GM12878 (cell line): ENCODE measurements at regions of chr11 and their contacts with region 1.

Region 1: GRCh38 chr11:9534791-9535781 is 38.4 kb upstream of the WEE1 start:
- DNase-seq: peak; percentile 25
- ATAC-seq: peak; percentile 87
- H3K4me3 ChIP-seq: no peak overlapping the region
- H3K27ac ChIP-seq: no peak overlapping the region
- H3K4me1 ChIP-seq: no peaks in the 10 kb centered on the region
- H3K27me3 ChIP-seq: no peaks in the 10 kb centered on the region
- CTCF ChIP-seq: peak; percentile 79 to 92 (median 86)
- EP300 ChIP-seq: no peak
- POLR2A ChIP-seq: no peak
- RAD21 ChIP-seq: peak; percentile 79

Region 2: DNA sequence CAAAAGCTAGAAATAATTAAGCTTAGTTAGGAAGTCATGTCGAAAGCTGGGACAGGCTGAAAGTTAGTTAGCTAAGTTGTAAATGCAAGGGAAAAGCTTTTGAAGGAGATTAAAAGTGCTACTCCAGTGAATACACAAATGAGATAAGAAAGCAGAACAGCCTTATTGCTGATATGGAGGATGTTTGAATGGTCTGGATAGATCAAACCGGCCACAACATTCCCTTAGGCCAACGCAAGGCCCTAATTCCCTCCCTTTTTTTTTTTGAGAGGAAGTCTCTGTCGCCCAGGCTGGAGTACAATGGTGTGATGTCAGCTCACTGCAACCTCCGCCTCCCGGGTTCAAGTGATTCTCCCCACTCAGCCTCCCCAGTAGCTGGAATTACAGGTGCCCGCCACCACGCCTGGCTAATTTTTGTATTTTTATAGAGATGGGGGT is 15.1 kb after region 1 on chr11:
- CTCF ChIA-PET with region 1: interaction called, 28 read pairs
- POLR2A ChIA-PET with region 1: interaction called, 3 read pairs
- RAD21 ChIA-PET with region 1: no interaction called
- SMC1A ChIA-PET with region 1: interaction called, 6 read pairs
- in situ Hi-C with region 1: no loop called
- intact Hi-C with region 1: no loop called
- DNase-seq: no peak
- ATAC-seq: no peak
- H3K4me3 ChIP-seq: no peak overlapping the region
- H3K27ac ChIP-seq: no peak overlapping the region
- H3K4me1 ChIP-seq: 0 out of 2 replicates have a peak, but pooled peaks cover 7% of the 10 kb centered on the region
- H3K27me3 ChIP-seq: no peaks in the 10 kb centered on the region
- CTCF ChIP-seq: no peak
- EP300 ChIP-seq: no peak
- POLR2A ChIP-seq: no peak
- RAD21 ChIP-seq: no peak

Region 3: DNA sequence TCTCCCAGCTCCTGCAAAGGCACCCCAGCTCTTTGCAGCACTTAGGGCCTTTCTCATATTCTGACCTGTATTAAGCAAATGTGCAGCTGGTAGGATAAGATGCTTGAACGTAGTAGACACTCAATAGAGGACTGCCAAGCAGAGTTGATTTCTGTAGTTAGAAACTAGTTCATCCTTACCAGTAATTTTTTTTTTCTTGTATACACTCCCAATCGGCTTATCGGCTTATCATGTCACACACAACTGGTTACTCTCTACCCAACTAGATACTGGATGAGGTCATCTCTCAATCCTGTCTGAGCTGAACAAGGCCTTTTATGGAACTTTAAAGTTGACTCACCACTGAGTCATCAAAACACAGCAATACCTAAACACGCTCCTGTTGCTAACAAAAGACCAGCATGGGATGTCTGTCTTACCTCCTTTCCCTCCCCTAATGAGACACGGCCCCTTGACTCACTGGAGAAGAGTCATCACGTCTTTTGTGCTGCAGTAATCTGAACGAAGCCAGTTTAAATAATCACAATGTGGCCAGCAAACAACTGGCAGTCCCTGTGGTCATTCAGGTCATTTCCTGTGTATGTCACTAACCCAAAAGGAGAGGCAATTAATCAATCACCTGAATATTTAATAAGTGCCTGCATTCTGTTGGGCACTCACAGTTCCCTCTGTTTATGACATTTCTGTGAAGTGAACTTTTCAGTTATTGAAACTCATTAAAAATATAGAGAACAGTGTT is 30.9 kb after region 1 on chr11:
- CTCF ChIA-PET with region 1: interaction called, 17 read pairs
- POLR2A ChIA-PET with region 1: interaction called, 3 read pairs
- RAD21 ChIA-PET with region 1: interaction called, 15 read pairs
- SMC1A ChIA-PET with region 1: interaction called, 4 read pairs
- in situ Hi-C with region 1: no loop called
- intact Hi-C with region 1: no loop called
- DNase-seq: peak; percentile 84
- ATAC-seq: peak; percentile 93
- H3K4me3 ChIP-seq: peak overlapping the region; percentile 17; the same call in 1 of the 2 replicates
- H3K27ac ChIP-seq: peak overlapping the region; percentile 54
- H3K4me1 ChIP-seq: peaks cover 21% of the 10 kb centered on the region
- H3K27me3 ChIP-seq: no peaks in the 10 kb centered on the region
- CTCF ChIP-seq: no peak
- EP300 ChIP-seq: peak; percentile 77 to 80; a peak in 3 of 4 replicates
- POLR2A ChIP-seq: no peak
- RAD21 ChIP-seq: no peak

Region 4: GRCh38 chr11:9573052-9573774 is 38.1 kb after region 1 on chr11 and contains the start of gene WEE1:
- CTCF ChIA-PET with region 1: interaction called, 31 read pairs
- POLR2A ChIA-PET with region 1: no interaction called
- RAD21 ChIA-PET with region 1: interaction called, 23 read pairs
- SMC1A ChIA-PET with region 1: interaction called, 29 read pairs
- in situ Hi-C with region 1: no loop called
- intact Hi-C with region 1: no loop called
- DNase-seq: peak; percentile 86
- ATAC-seq: peak; percentile 94
- H3K4me3 ChIP-seq: peak within 1 kb of the TSS; percentile 90
- H3K27ac ChIP-seq: peak within 1 kb of the TSS; percentile 90
- H3K4me1 ChIP-seq: peaks cover 6% of the 10 kb centered on the region; the same call in 1 of the 2 replicates
- H3K27me3 ChIP-seq: no peaks in the 10 kb centered on the region
- CTCF ChIP-seq: no peak
- EP300 ChIP-seq: no peak
- POLR2A ChIP-seq: peak; percentile 84
- RAD21 ChIP-seq: no peak
- polyA plus RNA-seq, gene WEE1: 20.6 to 22.2 TPM

Region 5: DNA sequence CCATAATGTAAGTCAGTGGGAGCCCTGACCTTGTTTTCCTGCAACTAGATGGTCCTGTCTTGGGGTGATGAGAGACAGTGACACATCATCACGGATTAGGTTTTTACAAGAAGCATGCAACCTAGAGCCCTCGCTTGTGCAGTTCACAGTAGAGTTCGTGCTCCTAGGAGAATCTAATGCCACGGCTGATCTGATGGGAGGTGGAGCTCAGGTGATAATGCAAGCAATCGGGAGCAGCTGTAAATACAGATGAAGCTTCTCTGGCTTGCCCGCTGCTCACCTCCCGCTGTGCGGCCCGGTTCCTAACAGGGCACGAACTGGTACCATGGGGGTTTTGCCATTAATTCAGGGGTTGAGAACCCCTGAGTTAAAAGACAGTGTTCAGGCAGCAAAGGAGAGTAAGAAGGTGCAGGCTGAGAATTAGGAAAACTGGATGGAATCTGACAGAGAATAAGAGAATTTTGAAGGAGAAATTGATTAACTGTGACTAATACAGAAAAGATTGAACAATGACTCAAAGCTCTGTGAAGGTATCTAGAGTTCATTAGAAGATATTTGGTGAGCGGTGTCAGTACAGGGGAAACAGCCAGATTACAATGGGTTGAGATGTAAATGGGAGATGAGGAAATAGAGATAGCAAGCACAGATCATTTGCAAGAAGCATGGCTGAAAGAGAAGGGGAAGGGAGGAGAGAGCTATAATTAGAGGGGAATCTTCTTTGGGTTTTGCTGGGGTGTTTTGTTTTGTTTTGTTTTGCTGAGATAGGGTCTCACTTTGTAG is 59.4 kb after region 1 on chr11:
- CTCF ChIA-PET with region 1: interaction called, 11 read pairs
- POLR2A ChIA-PET with region 1: no interaction called
- RAD21 ChIA-PET with region 1: interaction called, 23 read pairs
- SMC1A ChIA-PET with region 1: interaction called, 4 read pairs
- in situ Hi-C with region 1: no loop called
- intact Hi-C with region 1: no loop called
- DNase-seq: no peak
- ATAC-seq: no peak
- H3K4me3 ChIP-seq: no peak overlapping the region
- H3K27ac ChIP-seq: no peak overlapping the region
- H3K4me1 ChIP-seq: peaks cover 24% of the 10 kb centered on the region
- H3K27me3 ChIP-seq: no peaks in the 10 kb centered on the region
- CTCF ChIP-seq: no peak
- EP300 ChIP-seq: no peak
- POLR2A ChIP-seq: no peak
- RAD21 ChIP-seq: no peak

Region 6: DNA sequence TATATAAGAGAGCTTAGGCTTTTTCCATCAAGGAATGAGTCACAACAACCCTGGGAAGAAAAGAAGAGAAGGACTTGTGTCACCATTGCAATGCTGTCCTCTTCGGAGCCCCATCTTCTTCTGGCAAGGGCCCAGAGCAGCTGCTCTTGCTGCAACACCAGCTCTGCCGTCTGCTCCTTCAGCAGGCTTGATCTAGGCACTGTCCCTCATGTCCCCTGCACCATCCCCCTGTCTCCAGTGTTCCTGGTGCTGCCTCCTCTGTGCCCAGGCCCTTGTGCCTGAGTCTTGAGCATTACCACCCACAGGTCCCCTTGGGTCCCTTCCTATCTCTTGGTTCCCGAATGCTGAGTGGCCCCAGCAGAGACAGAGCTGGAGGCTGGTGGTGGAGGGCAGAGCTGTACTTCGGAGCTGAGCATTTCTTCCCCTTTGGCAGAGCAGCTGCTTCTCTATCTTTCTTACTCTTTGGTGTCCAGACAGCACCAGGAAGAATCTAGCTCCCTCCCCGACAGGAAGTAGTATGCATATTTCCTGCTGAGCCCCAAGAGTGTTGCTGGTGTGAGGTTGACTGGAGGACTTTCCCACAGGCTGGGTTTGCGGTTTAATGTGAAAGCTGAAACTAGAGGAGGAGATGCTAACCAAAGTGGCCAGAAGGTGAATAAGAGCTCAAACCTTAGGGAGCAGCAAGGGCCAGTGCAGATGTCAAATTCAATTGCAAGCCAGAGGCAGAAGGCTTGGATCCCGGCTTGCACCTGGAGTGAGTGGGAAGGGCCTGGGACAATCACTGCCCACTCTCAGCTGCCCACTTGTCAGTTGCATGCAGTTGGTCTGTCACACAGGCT is 66.2 kb after region 1 on chr11:
- CTCF ChIA-PET with region 1: interaction called, 26 read pairs
- POLR2A ChIA-PET with region 1: no interaction called
- RAD21 ChIA-PET with region 1: interaction called, 23 read pairs
- SMC1A ChIA-PET with region 1: interaction called, 14 read pairs
- in situ Hi-C with region 1: no loop called
- intact Hi-C with region 1: no loop called
- DNase-seq: peak; percentile 95
- ATAC-seq: peak; percentile 90
- H3K4me3 ChIP-seq: peak overlapping the region; percentile 64
- H3K27ac ChIP-seq: peak overlapping the region; percentile 87
- H3K4me1 ChIP-seq: peaks cover 40% of the 10 kb centered on the region
- H3K27me3 ChIP-seq: no peaks in the 10 kb centered on the region
- CTCF ChIP-seq: no peak
- EP300 ChIP-seq: peak in 1 of 2 experiments; percentile 60; a peak in 2 of 4 replicates
- POLR2A ChIP-seq: peak; percentile 30; the same call in 1 of the 2 replicates
- RAD21 ChIP-seq: no peak

Region 7: GRCh38 chr11:9972989-9973388 is 437.9 kb after region 1 on chr11:
- CTCF ChIA-PET with region 1: no interaction called
- POLR2A ChIA-PET with region 1: no interaction called
- RAD21 ChIA-PET with region 1: no interaction called
- SMC1A ChIA-PET with region 1: interaction called, 7 read pairs
- in situ Hi-C with region 1: loop called (anchors 10 kb)
- intact Hi-C with region 1: no loop called
- DNase-seq: no peak
- ATAC-seq: peak; percentile 85
- H3K4me3 ChIP-seq: no peak overlapping the region
- H3K27ac ChIP-seq: no peak overlapping the region
- H3K4me1 ChIP-seq: no peaks in the 10 kb centered on the region
- H3K27me3 ChIP-seq: no peaks in the 10 kb centered on the region
- CTCF ChIP-seq: peak; percentile 62 to 75 (median 75)
- EP300 ChIP-seq: no peak
- POLR2A ChIP-seq: no peak
- RAD21 ChIP-seq: peak; percentile 93